ENCODE measurements at regions of chr17 and their contacts with region 1.

Region 1: DNA sequence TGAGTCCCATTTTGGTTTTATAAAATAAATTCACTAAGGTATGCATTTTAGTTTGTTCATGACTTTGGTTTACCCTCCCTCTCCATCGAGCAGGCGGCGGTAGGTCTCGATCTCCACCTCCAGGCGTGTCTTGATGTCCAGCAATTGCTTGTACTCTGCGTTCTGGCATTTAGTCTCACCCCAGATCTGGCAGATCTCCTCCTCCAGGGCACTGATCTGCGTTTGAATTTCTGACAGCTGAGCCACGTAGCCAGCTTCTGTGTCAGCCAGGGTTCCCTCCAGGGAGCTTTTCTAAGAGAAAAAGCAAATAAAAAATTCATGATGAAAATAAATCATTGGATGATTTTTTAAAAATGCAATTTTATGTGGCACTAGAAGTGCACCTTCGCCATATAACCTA is 4.2 kb downstream of the KRT24 start:
- DNase-seq: no peak
- H3K4me3 Mint-ChIP-seq: no peak overlapping the region
- H3K27ac Mint-ChIP-seq: no peak overlapping the region
- H3K4me1 Mint-ChIP-seq: peaks cover 46% of the 10 kb centered on the region
- H3K27me3 Mint-ChIP-seq: peaks cover 29% of the 10 kb centered on the region
- CTCF ChIP-seq: no peak

Region 2: GRCh38 chr17:40107522-40108174 is 591.7 kb before region 1 on chr17:
- CTCF ChIA-PET with region 1: no interaction called
- intact Hi-C with region 1: no loop called
- DNase-seq: no peak
- H3K4me3 Mint-ChIP-seq: peak overlapping the region; percentile 9
- H3K27ac Mint-ChIP-seq: peak overlapping the region; percentile 13
- H3K4me1 Mint-ChIP-seq: peaks cover 93% of the 10 kb centered on the region
- H3K27me3 Mint-ChIP-seq: no peaks in the 10 kb centered on the region
- CTCF ChIP-seq: no peak

Region 3: GRCh38 chr17:40358323-40359038 is 340.9 kb before region 1 on chr17:
- CTCF ChIA-PET with region 1: no interaction called
- intact Hi-C with region 1: no loop called
- DNase-seq: peak; percentile 100
- H3K4me3 Mint-ChIP-seq: peak overlapping the region; percentile 0
- H3K27ac Mint-ChIP-seq: peak overlapping the region; percentile 1
- H3K4me1 Mint-ChIP-seq: peaks cover 33% of the 10 kb centered on the region
- H3K27me3 Mint-ChIP-seq: peaks cover 3% of the 10 kb centered on the region
- CTCF ChIP-seq: no peak

Region 4: GRCh38 chr17:40632216-40632615 is 67.2 kb before region 1 on chr17:
- CTCF ChIA-PET with region 1: interaction called, 10 read pairs
- intact Hi-C with region 1: no loop called
- DNase-seq: peak; percentile 4
- H3K4me3 Mint-ChIP-seq: no peak overlapping the region
- H3K27ac Mint-ChIP-seq: no peak overlapping the region
- H3K4me1 Mint-ChIP-seq: no peaks in the 10 kb centered on the region
- H3K27me3 Mint-ChIP-seq: no peaks in the 10 kb centered on the region
- CTCF ChIP-seq: no peak

Region 5: GRCh38 chr17:40664582-40665333 is 34.6 kb before region 1 on chr17 and contains the start of gene KRT222:
- CTCF ChIA-PET with region 1: interaction called, 55 read pairs
- intact Hi-C with region 1: no loop called
- DNase-seq: no peak
- H3K4me3 Mint-ChIP-seq: peak within 1 kb of the TSS; percentile 46
- H3K27ac Mint-ChIP-seq: no peak within 1 kb of the TSS
- H3K4me1 Mint-ChIP-seq: peaks cover 19% of the 10 kb centered on the region
- H3K27me3 Mint-ChIP-seq: peaks cover 86% of the 10 kb centered on the region
- CTCF ChIP-seq: no peak
- total RNA-seq, gene KRT222: not detected in 2 replicates

Region 6: GRCh38 chr17:40686192-40686591 is 13.2 kb before region 1 on chr17:
- CTCF ChIA-PET with region 1: interaction called, 205 read pairs
- intact Hi-C with region 1: no loop called
- DNase-seq: no peak
- H3K4me3 Mint-ChIP-seq: no peak overlapping the region
- H3K27ac Mint-ChIP-seq: no peak overlapping the region
- H3K4me1 Mint-ChIP-seq: no peaks in the 10 kb centered on the region
- H3K27me3 Mint-ChIP-seq: peaks cover 38% of the 10 kb centered on the region
- CTCF ChIP-seq: no peak

Region 7: GRCh38 chr17:40726919-40727318 is 27.5 kb after region 1 on chr17:
- CTCF ChIA-PET with region 1: interaction called, 39 read pairs
- intact Hi-C with region 1: loop called (anchors 1 kb)
- DNase-seq: peak; percentile 45
- H3K4me3 Mint-ChIP-seq: no peak overlapping the region
- H3K27ac Mint-ChIP-seq: no peak overlapping the region
- H3K4me1 Mint-ChIP-seq: peaks cover 19% of the 10 kb centered on the region
- H3K27me3 Mint-ChIP-seq: peaks cover 54% of the 10 kb centered on the region
- CTCF ChIP-seq: no peak

Region 8: GRCh38 chr17:40750391-40750790 is 51.0 kb after region 1 on chr17:
- CTCF ChIA-PET with region 1: interaction called, 14 read pairs
- intact Hi-C with region 1: no loop called
- DNase-seq: no peak
- H3K4me3 Mint-ChIP-seq: no peak overlapping the region
- H3K27ac Mint-ChIP-seq: no peak overlapping the region
- H3K4me1 Mint-ChIP-seq: no peaks in the 10 kb centered on the region
- H3K27me3 Mint-ChIP-seq: peaks cover 77% of the 10 kb centered on the region
- CTCF ChIP-seq: no peak

Region 9: GRCh38 chr17:40830085-40830776 is 130.9 kb after region 1 on chr17:
- CTCF ChIA-PET with region 1: no interaction called
- intact Hi-C with region 1: no loop called
- DNase-seq: no peak
- H3K4me3 Mint-ChIP-seq: no peak overlapping the region
- H3K27ac Mint-ChIP-seq: no peak overlapping the region
- H3K4me1 Mint-ChIP-seq: peaks cover 8% of the 10 kb centered on the region
- H3K27me3 Mint-ChIP-seq: no peaks in the 10 kb centered on the region
- CTCF ChIP-seq: no peak